ENCODE measurements at regions of chr6 and their contacts with region 1.

Region 1: GRCh38 chr6:140537819-140538705 is 1163.6 kb upstream of the CITED2 start:
- DNase-seq: no peak
- ATAC-seq: peak; percentile 87

Region 2: GRCh38 chr6:140478631-140479030 is 59.4 kb before region 1 on chr6:
- intact Hi-C with region 1: loop called (anchors 2 kb)
- DNase-seq: no peak
- ATAC-seq: no peak

Measured in left ventricle myocardium superior (tissue), 1 donor.